Heart right ventricle (tissue), 16 donors: ENCODE measurements at regions of chr16 and their contacts with region 1.

Region 1: DNA sequence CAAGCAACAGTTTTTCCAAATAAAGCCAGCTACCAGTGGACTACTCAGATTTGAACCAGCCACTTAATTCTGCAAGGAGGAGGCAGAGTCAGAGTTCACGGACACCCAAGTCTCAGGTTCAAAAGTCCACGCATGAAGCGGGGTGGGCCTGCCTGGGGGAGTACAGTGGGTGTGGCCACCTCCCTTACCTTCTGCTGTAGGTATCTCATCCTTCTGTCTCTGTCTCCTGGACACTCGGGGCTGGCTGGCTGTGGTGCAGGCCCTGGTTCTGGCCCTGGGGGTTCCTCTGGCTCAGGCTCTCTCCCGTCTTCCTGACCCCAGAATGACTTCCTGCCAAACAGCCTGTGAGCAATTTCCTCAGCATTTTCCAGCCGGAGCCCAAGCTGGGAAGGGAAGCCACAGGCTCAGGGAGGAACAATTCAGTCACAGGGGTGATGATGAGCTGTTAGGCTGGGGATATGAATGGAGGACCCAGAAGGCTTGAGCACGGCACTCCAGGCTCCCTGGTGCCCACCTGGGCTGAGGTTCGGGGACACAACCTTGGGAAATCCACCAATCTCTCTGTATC is 101.9 kb downstream of the LITAF start:
- DNase-seq: no peak
- ATAC-seq: peak in 3 of 8 donors; percentile 49 to 51 (median 50)
- H3K4me3 ChIP-seq: no peak overlapping the region
- H3K27ac ChIP-seq: no peak overlapping the region
- H3K4me1 ChIP-seq: peaks cover 0 to 3% (median 0%) of the 10 kb centered on the region in 9 donors
- H3K27me3 ChIP-seq: no peaks in the 10 kb centered on the region
- CTCF ChIP-seq: no peak

Region 2: DNA sequence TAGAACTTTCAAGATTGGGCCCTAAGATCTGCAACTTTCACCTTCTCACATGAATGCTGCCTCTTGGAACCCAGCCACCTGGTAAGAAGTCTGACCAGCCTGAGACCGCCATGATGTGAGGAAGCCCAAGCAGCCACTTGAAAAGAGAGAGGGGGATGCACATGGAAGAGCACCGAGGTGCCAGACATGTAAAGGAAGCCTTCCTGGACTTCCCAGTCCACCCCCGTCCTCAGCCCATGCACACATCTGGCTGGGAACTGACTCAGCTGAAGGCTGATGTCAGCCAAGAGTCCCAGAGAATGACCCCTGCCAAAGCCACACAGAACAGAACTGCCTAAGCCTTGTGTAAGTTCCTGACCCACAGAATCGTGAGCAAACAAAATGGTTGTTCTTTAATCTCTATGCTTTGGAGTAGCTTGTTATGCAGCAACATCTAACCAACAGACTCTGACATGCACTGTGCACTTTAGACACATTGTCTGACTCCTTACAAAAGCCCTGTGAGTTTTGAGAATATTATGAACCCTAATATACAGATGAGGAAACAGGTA is 52.8 kb before region 1 on chr16:
- intact Hi-C with region 1: loop called in 1 of 10 experiments (anchors 10 kb)
- DNase-seq: no peak
- ATAC-seq: no peak
- H3K4me3 ChIP-seq: no peak overlapping the region
- H3K27ac ChIP-seq: no peak overlapping the region
- H3K4me1 ChIP-seq: no peaks in the 10 kb centered on the region
- H3K27me3 ChIP-seq: peaks cover 0 to 10% (median 0%) of the 10 kb centered on the region in 7 donors
- CTCF ChIP-seq: no peak